BJ (cell line): ENCODE measurements at regions of chr2 and their contacts with region 1.

Region 1: DNA sequence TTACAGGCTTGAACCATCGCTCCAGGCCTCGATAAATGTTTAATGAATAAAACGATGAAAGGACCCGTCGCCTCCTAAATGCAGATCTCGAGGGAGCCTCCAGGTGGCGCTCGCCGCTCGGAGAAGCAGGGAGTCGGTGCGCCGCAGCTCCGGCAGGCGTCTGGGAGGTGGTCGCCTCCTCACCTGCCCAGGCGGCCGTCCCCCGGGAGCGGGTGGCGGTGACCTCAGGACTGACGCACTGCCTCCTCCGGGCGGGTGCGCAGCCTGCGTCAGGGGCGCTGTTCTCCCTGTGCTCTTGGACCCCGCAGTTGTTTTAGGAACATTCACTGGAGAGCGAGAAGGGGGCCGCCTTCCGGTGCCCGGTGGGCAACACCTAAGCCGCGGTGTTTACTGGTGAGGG is 38.6 kb upstream of the POLE4 start:
- DNase-seq: no peak
- H3K4me3 ChIP-seq: peak overlapping the region; percentile 37
- H3K27me3 ChIP-seq: no peaks in the 10 kb centered on the region
- CTCF ChIP-seq: peak; percentile 81

Region 2: DNA sequence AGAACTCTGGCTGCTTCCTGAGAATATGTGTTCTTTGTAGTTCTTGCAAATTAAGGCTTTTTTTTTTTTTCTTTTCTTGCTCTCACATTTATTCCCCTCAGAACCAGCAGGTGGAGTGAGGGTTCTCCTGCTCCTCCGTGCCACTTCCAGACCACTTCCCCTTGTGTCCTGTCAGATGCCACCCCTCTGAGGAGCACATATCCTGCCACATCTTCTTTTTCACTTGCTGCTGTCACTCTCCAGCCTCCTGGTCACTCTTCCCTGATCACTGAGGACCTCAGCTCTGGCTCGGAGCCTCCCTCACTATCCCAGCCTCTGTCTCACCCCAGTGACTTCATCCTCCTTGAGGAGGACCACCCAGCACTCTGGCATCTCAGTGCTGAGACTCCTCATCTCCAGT is 179.0 kb after region 1 on chr2:
- CTCF ChIA-PET with region 1: interaction called, 10 read pairs
- POLR2A ChIA-PET with region 1: no interaction called
- DNase-seq: no peak
- H3K4me3 ChIP-seq: no peak overlapping the region
- H3K27me3 ChIP-seq: peaks cover 1% of the 10 kb centered on the region; the same call in 1 of the 2 replicates
- CTCF ChIP-seq: peak; percentile 71